Adrenal gland (tissue), 19 donors: ENCODE measurements at regions of chr11 and their contacts with region 1.

Region 1: DNA sequence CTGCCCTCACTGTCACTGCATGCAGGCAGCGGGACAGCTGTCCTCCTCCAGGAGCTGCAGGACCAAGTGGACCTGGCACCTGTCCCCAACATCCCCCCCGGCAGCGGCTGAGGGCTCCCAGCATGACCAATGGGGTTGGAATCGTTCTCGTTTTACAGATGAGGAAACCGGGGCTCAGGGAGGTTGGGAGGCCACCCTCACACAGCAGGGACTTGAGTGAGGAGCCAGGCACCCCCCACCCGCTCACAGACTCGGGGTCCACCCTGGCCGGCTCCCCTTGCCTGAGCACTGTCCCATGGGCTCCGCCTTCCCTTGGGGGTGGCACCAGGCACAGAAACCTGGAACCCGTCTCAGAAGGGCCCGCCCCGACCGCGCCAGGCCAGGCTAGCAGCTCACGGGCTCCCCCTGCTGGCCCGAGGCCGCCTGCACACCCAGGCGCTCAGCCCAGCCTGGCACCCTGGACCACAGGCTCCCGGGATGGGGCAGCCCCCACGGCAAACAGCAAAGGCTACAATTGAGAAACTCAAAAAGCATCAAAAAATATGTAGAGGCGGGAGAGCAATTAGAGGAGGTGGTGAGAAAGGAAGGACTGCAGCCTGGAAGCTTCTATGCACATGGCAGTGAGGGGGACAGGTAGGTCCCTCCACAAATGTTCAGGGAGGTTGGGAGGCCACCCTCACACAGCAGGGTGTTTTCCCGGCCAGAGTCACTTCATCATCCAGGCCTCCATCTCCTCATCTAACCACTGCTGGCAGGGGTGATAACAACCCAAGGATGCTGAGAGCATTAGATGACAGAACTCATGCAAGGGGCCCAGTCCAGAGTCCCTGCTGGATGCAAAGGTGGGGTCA is 12.8 kb downstream of the MACROD1 start:
- DNase-seq: peak; percentile 46 to 78 (median 67)
- H3K4me3 ChIP-seq: no peak overlapping the region
- H3K27ac ChIP-seq: no peak overlapping the region
- H3K4me1 ChIP-seq: peaks cover 6 to 21% of the 10 kb centered on the region in 2 donors
- H3K27me3 ChIP-seq: no peaks in the 10 kb centered on the region
- CTCF ChIP-seq: peak; percentile 79 to 100 (median 96)
- POLR2A ChIP-seq: no peak

Region 2: DNA sequence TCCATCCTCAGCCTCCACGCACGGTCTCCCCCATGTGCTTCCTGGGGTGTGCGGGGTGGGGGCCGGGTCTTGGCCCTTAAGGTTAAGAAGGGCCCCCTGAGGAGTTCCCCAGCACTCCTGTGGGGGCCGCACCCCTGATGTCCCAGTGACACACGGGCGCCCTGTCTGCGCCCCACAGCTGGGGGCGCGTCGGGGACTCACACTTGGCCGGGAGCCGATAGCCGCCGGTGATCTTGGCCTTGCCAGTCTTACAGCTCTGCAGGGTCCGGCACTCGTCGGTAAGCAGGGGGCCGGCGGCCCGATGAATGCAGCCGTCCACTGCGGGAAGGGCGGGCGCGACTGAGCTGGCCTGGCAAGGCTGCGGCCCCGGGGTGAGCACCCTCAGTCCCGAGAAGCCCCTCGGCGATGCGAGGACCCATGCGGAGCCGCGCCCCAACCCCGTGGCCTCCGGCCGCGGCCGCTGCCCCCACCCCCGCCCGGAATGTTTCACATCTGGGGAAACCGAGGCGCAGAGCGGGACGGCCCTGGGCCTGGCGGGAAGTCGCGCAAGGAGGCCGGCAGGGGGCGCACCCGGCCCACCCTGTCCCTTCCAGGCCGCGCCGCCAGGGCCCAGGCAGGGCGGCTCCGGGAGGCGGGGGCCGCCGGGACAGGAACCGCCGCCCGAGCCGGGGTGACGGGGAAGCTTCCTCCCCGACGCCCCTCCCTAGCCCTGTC is 152.9 kb before region 1 on chr11:
- intact Hi-C with region 1: loop called (anchors 2 kb)
- DNase-seq: peak; percentile 43 to 80 (median 69)
- H3K4me3 ChIP-seq: peak overlapping the region in 1 of 4 donors; percentile 39
- H3K27ac ChIP-seq: no peak overlapping the region
- H3K4me1 ChIP-seq: peaks cover 5 to 33% of the 10 kb centered on the region in 2 donors
- H3K27me3 ChIP-seq: no peaks in the 10 kb centered on the region
- CTCF ChIP-seq: peak; percentile 46 to 97 (median 68)
- POLR2A ChIP-seq: no peak

Region 3: DNA sequence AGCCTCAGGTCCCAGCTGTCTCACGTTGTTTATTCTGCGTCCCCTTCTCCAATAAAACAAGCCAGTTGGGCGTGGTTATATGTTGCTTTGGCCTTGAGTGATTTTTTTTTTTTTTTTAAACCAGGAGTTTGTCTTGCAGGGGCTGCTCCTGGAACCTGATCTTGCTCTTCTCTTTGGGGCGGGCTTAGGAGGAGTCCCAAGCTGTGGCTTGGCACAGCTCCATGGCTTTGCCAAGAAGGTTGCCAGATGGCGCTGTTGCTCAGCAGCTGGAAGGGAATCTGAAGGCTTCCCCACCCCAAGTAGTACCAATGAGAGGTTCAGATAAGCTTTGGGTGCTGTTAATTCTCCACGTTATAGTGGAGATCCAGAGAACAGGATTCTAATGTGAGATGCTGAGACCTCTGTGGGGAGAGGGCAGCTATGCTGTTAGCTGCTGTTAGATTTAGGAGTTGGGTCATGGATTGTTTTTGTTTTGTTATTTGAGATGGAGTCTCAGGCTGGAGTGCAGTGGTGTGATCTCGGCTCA is 51.5 kb after region 1 on chr11:
- intact Hi-C with region 1: no loop called
- DNase-seq: peak; percentile 89 to 96 (median 93)
- H3K4me3 ChIP-seq: no peak overlapping the region
- H3K27ac ChIP-seq: peak overlapping the region in 3 of 5 donors; percentile 16 to 29 (median 21)
- H3K4me1 ChIP-seq: peaks cover 8 to 24% of the 10 kb centered on the region in 2 donors
- H3K27me3 ChIP-seq: no peaks in the 10 kb centered on the region
- CTCF ChIP-seq: peak; percentile 38 to 83 (median 78)
- POLR2A ChIP-seq: no peak

Region 4: GRCh38 chr11:64216879-64217278 is 63.8 kb after region 1 on chr11:
- intact Hi-C with region 1: no loop called
- DNase-seq: peak in 1 of 7 donors; percentile 10
- H3K4me3 ChIP-seq: no peak overlapping the region
- H3K27ac ChIP-seq: no peak overlapping the region
- H3K4me1 ChIP-seq: no peaks in the 10 kb centered on the region
- H3K27me3 ChIP-seq: no peaks in the 10 kb centered on the region
- CTCF ChIP-seq: no peak
- POLR2A ChIP-seq: no peak